Endothelial cell of umbilical vein (primary cell): ENCODE measurements at regions of chr13 and their contacts with region 1.

Region 1: GRCh38 chr13:36736119-36736726 is 62.4 kb downstream of the SERTM1 start:
- DNase-seq: peak; percentile 65
- H3K4me3 ChIP-seq: no peak overlapping the region
- H3K27ac ChIP-seq: no peak overlapping the region
- H3K4me1 ChIP-seq: no peaks in the 10 kb centered on the region
- H3K27me3 ChIP-seq: peaks cover 5 to 8% of the 10 kb centered on the region in 2 experiments
- CTCF ChIP-seq: peak; percentile 45 to 48
- POLR2A ChIP-seq: no peak

Region 2: GRCh38 chr13:35978603-35979316 is 757.5 kb before region 1 on chr13:
- CTCF ChIA-PET with region 1: interaction called, 18 read pairs
- POLR2A ChIA-PET with region 1: no interaction called
- dilution Hi-C with region 1: no loop called
- intact Hi-C with region 1: loop called (anchors 2 kb)
- DNase-seq: peak; percentile 78
- H3K4me3 ChIP-seq: no peak overlapping the region
- H3K27ac ChIP-seq: no peak overlapping the region
- H3K4me1 ChIP-seq: peaks cover 7% of the 10 kb centered on the region
- H3K27me3 ChIP-seq: no peaks in the 10 kb centered on the region
- CTCF ChIP-seq: peak; percentile 35 to 50
- POLR2A ChIP-seq: no peak

Region 3: GRCh38 chr13:36453516-36453915 is 282.7 kb before region 1 on chr13:
- CTCF ChIA-PET with region 1: interaction called, 416 read pairs
- POLR2A ChIA-PET with region 1: no interaction called
- dilution Hi-C with region 1: no loop called
- intact Hi-C with region 1: loop called (anchors 1 kb)
- DNase-seq: peak; percentile 49
- H3K4me3 ChIP-seq: no peak overlapping the region
- H3K27ac ChIP-seq: no peak overlapping the region
- H3K4me1 ChIP-seq: no peaks in the 10 kb centered on the region
- H3K27me3 ChIP-seq: peaks cover 0 to 4% of the 10 kb centered on the region in 2 experiments
- CTCF ChIP-seq: peak; percentile 29 to 41
- POLR2A ChIP-seq: no peak

Region 4: GRCh38 chr13:36543671-36544070 is 192.6 kb before region 1 on chr13:
- CTCF ChIA-PET with region 1: interaction called, 15 read pairs
- POLR2A ChIA-PET with region 1: no interaction called
- dilution Hi-C with region 1: no loop called
- intact Hi-C with region 1: no loop called
- DNase-seq: no peak
- H3K4me3 ChIP-seq: no peak overlapping the region
- H3K27ac ChIP-seq: no peak overlapping the region
- H3K4me1 ChIP-seq: no peaks in the 10 kb centered on the region
- H3K27me3 ChIP-seq: peaks cover 4% of the 10 kb centered on the region in 2 experiments
- CTCF ChIP-seq: no peak
- POLR2A ChIP-seq: no peak

Region 5: DNA sequence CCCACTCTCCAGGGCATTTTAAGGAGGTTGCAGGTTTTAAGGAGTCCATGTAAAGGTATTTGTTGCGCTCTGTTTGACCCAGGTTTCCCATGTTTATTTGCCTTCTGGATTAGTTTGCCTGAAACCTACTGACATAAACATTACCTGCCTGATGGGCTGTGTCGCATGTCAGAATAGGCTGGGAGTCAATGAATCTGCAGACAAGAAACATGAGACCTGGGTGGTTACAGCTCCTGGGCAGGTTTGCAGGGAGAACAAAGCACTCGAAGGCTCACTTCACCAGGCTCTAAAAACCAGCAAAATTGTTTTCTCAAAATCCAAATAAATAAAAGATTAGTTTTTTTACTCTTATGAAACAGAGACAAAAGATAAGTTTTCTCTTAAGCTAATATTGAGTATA is 176.8 kb before region 1 on chr13:
- CTCF ChIA-PET with region 1: no interaction called
- POLR2A ChIA-PET with region 1: no interaction called
- dilution Hi-C with region 1: no loop called
- intact Hi-C with region 1: no loop called
- DNase-seq: no peak
- H3K4me3 ChIP-seq: no peak overlapping the region
- H3K27ac ChIP-seq: no peak overlapping the region
- H3K4me1 ChIP-seq: no peaks in the 10 kb centered on the region
- H3K27me3 ChIP-seq: no peaks in the 10 kb centered on the region
- CTCF ChIP-seq: no peak
- POLR2A ChIP-seq: no peak

Region 6: DNA sequence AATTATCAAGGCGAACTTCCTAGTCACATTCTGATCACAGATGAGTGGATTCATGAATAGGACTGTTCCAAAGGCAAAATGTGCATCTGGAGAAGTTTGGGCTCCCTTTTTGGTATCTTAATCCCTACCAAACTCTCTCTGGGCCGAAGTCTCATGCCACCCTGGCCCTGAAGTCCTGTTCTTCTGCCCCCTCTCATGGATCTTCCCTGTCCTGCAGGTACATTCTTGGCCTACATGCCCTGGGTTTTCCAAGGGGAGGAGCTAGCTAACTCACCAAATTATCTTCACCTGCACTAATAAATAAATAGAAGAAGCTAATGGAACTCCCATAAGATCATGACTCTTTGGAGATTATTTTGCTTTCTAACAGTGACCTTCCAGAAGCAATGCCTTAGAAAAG is 12.1 kb before region 1 on chr13:
- CTCF ChIA-PET with region 1: interaction called, 20 read pairs
- POLR2A ChIA-PET with region 1: no interaction called
- dilution Hi-C with region 1: no loop called
- intact Hi-C with region 1: no loop called
- DNase-seq: no peak
- H3K4me3 ChIP-seq: no peak overlapping the region
- H3K27ac ChIP-seq: no peak overlapping the region
- H3K4me1 ChIP-seq: no peaks in the 10 kb centered on the region
- H3K27me3 ChIP-seq: peaks cover 6 to 8% of the 10 kb centered on the region in 2 experiments
- CTCF ChIP-seq: no peak
- POLR2A ChIP-seq: no peak